ENCODE measurements at regions of chr20 and their contacts with region 1.

Region 1: DNA sequence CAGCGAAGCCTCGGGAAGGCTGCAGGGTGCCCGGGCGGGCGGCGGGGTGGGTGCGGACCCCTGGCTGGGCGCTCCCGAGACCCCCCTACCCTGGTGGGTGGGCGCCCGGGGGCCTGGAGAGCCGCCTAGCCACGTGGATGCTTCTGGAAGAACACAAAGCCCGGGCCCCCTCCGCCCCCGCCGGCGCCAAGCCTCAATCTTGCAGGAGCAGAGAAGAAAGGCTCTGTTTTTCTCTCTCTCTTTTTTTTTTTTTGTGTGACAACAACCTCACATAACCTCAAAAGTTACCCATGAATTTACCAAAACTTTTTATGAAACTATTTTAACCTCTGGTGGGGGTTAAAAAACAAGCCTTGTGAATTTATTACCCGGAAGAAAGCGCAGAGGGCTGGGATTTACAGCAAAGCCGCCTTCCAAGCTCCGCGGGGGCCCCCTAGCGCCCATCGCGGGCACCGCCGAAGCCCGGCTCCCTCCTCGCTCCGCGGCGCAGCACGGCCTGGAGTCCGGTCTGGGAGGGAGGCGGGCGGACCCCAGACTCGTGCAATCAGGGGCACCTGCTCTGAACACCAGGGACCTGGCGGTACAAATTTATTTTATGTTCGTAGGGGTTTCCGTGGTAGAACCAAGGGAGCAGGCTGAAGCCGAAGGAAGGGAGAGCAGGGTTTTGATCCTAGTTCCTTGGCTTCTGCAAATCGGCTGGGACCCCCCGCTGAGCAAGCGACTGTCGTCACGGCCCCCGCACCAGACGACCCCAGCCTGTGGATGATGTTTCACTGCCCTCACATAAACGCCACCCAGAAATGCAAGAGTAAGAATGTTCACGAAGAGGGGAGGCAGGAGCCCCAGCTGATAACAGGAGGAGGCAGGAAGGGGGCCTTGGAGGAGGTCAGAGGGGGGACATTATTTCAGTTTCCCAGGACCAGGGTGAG is 58.9 kb downstream of the ZNF831 start:
- DNase-seq: peak; percentile 72 to 90 (median 81)
- ATAC-seq: peak; percentile 71 to 97 (median 92)
- H3K4me3 ChIP-seq: peak overlapping the region; percentile 21 to 66 (median 58)
- H3K27ac ChIP-seq: peak overlapping the region in 9 of 12 donors; percentile 7 to 87 (median 72)
- H3K4me1 ChIP-seq: peaks cover 0 to 26% (median 14%) of the 10 kb centered on the region in 12 donors
- H3K27me3 ChIP-seq: peaks cover 0 to 31% (median 15%) of the 10 kb centered on the region in 9 donors
- CTCF ChIP-seq: peak; percentile 92 to 99 (median 97)
- POLR2A ChIP-seq: no peak

Region 2: DNA sequence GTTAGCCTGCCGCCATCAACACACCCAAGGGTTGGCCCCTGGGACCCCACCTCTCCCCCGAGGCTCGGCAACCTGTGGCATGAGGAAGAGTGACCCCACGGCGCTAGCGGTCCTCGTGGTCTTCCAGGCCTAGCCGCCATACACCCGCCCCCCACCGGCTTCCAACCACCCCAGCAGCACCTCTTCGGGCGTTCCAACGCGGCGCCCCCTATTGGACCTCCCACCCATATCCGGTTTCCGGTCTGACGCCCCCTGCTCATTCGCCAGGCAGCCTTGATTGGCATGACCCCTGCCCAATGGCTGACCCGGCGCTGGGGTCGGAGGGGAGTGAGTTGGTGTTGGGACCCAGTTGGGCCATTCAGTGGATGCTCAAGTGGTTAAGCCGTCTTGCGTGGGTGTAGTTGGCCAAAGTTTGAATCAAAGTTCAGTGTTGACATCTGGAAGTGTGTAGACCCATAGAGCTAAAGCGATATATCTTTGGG is 371.8 kb before region 1 on chr20 and contains the start of gene GNAS-AS1:
- intact Hi-C with region 1: no loop called
- DNase-seq: peak; percentile 83 to 91 (median 88)
- ATAC-seq: peak; percentile 79 to 91 (median 88)
- H3K4me3 ChIP-seq: peak within 1 kb of the TSS; percentile 15 to 78 (median 57)
- H3K27ac ChIP-seq: no peak within 1 kb of the TSS
- H3K4me1 ChIP-seq: peaks cover 0 to 27% (median 5%) of the 10 kb centered on the region in 12 donors
- H3K27me3 ChIP-seq: peaks cover 11 to 61% (median 26%) of the 10 kb centered on the region in 9 donors
- CTCF ChIP-seq: peak in 3 of 12 donors; percentile 15 to 23 (median 22)
- POLR2A ChIP-seq: no peak
- total RNA-seq, gene GNAS-AS1: 0.22 to 0.79 (median 0.29) TPM in 7 of 9 donors, not detected in the others

Region 3: GRCh38 chr20:59055295-59055694 is 167.2 kb before region 1 on chr20:
- intact Hi-C with region 1: loop called in 3 of 10 experiments (anchors 10 kb)
- DNase-seq: no peak
- ATAC-seq: no peak
- H3K4me3 ChIP-seq: no peak overlapping the region
- H3K27ac ChIP-seq: no peak overlapping the region
- H3K4me1 ChIP-seq: no peaks in the 10 kb centered on the region
- H3K27me3 ChIP-seq: peaks cover 0 to 10% (median 0%) of the 10 kb centered on the region in 9 donors
- CTCF ChIP-seq: peak in 9 of 12 donors; percentile 30 to 63 (median 37)
- POLR2A ChIP-seq: no peak

Region 4: DNA sequence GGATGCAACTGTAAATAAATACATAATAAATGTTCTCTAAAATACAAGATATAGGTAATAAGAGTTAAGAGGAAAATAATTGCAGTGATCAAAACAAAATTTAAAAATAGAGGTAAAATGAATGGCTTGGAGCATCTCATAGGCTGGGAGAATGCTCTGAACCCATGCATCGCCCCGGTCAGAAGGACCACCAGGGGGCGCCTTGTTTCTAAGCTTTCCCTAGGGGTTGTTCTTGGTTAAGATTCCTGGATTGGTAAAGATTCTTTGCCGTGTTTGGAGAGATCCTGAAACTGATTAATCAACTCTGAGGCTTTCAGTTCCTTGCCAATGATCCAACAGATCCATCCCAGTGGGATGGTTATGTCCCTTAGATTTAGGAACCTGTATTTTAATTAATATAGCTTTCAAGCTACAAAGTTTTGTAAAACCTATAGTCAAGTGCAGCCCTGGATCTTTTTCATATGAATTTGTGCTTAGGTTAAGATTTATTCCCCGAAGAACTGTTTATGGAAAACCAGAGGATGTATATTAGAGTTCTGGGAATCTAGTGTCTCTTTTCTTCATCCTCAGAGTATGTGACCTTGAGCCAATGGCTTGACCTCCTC is 134.6 kb before region 1 on chr20:
- intact Hi-C with region 1: loop called (anchors 1 to 5 kb)
- DNase-seq: peak; percentile 75 to 86 (median 82)
- ATAC-seq: peak in 3 of 4 donors; percentile 75 to 83 (median 81)
- H3K4me3 ChIP-seq: no peak overlapping the region
- H3K27ac ChIP-seq: no peak overlapping the region
- H3K4me1 ChIP-seq: peaks cover 0 to 9% (median 3%) of the 10 kb centered on the region in 12 donors
- H3K27me3 ChIP-seq: peaks cover 0 to 4% (median 0%) of the 10 kb centered on the region in 9 donors
- CTCF ChIP-seq: peak; percentile 85 to 98 (median 94)
- POLR2A ChIP-seq: no peak

Region 5: GRCh38 chr20:59149651-59150504 is 72.6 kb before region 1 on chr20:
- intact Hi-C with region 1: loop called in 1 of 10 experiments (anchors 5 kb)
- DNase-seq: peak in 3 of 5 donors; percentile 35 to 56 (median 50)
- ATAC-seq: peak in 2 of 4 donors; percentile 14 to 73
- H3K4me3 ChIP-seq: peak overlapping the region in 1 of 12 donors; percentile 13
- H3K27ac ChIP-seq: peak overlapping the region in 9 of 12 donors; percentile 33 to 77 (median 66)
- H3K4me1 ChIP-seq: peaks cover 4 to 64% (median 38%) of the 10 kb centered on the region in 12 donors
- H3K27me3 ChIP-seq: no peaks in the 10 kb centered on the region
- CTCF ChIP-seq: no peak
- POLR2A ChIP-seq: no peak

Region 6: DNA sequence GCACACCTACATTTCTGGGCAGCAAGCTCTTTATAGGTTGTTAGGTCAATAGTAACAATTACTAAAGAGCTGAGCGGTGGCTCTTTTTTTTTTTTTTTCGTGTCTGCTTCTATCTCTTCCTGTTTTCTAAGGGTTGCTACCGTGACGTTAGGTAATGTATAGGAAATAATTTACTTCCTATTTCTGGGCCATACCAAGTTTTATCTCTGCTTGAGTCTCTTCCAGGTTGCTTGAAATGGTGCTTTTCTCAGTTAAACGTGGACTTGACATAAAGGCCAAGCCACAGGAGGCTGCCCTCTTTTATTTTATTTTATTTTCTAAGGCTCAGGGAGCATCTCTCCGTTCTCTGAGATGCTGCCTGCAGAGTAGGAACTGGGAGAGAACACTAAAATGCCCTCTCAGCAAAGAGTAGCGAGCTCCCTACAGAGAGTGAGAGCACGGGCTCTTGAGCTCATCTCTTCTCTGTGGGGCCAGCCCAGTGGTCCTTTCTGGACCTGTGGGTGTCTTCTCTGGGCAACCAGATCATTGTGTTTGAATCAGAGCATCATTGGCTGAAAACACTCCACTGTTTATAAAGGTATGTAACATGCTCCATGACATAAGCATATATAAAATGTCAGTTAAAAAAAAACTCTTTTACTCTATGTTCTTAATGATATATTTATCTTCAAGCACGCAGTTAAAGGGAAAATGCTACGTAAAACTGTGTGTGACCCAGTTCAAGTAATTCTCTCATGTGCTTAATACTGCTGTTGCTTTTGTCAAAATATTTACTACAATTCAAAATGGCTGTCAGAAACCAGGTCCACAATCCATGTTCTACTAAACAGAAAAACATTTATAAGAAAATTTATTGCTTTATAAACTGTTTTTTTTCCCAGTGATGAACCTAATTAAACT is 58.6 kb before region 1 on chr20 and contains the start of gene ZNF831:
- intact Hi-C with region 1: no loop called
- DNase-seq: no peak
- ATAC-seq: no peak
- H3K4me3 ChIP-seq: peak within 1 kb of the TSS in 2 of 12 donors; percentile 5 to 49
- H3K27ac ChIP-seq: peak within 1 kb of the TSS in 2 of 12 donors; percentile 35 to 88
- H3K4me1 ChIP-seq: no peaks in the 10 kb centered on the region
- H3K27me3 ChIP-seq: peaks cover 0 to 14% (median 0%) of the 10 kb centered on the region in 9 donors
- CTCF ChIP-seq: no peak
- POLR2A ChIP-seq: no peak
- total RNA-seq, gene ZNF831: 0.02 to 0.77 (median 0.07) TPM in 7 of 9 donors, not detected in the others

Region 7: DNA sequence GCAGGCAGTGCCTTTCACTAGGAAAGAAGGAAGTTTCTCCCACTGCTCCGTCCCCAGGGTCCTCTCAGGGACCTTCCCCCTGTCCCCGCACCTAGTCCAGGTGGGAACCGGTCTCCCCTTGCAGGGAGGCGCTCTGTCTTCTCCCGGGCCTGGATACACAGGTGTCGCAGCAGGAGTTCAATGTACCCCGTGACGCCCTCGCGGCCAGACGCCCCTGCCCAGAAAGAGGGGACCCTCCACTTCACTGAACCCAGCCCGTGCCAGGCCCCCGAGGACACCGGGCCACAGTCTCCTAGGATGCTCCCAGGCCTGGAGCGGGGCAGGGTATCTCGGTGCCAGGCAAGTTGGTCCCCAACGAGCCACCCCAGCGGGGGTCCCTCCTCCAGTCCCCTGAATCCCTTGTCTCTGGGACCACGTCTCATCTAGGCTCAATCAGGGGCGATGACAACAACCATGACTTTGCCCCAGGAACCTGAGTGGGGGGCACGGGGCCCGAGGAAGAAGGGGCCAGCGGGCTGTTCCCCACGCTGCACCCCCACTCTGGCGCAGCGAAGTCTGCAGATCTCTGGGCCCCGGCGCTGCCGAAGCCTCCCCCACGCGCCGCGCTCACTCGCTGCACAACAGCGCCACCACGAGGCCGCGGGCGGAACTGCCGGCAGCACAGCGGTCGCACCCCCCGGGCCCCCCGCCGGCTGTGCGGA is 180.9 kb after region 1 on chr20:
- intact Hi-C with region 1: loop called in 2 of 10 experiments (anchors 5 to 10 kb)
- DNase-seq: peak in 4 of 5 donors; percentile 29 to 75 (median 40)
- ATAC-seq: peak in 3 of 4 donors; percentile 33 to 70 (median 56)
- H3K4me3 ChIP-seq: peak overlapping the region in 4 of 12 donors; percentile 3 to 11 (median 4)
- H3K27ac ChIP-seq: no peak overlapping the region
- H3K4me1 ChIP-seq: peaks cover 0 to 18% (median 7%) of the 10 kb centered on the region in 12 donors
- H3K27me3 ChIP-seq: peaks cover 9 to 81% (median 47%) of the 10 kb centered on the region in 9 donors
- CTCF ChIP-seq: peak; percentile 88 to 98 (median 94)
- POLR2A ChIP-seq: no peak

Region 8: GRCh38 chr20:59495894-59496510 is 273.5 kb after region 1 on chr20:
- intact Hi-C with region 1: loop called in 1 of 10 experiments (anchors 10 kb)
- DNase-seq: peak; percentile 50 to 77 (median 62)
- ATAC-seq: peak in 3 of 4 donors; percentile 56 to 64 (median 60)
- H3K4me3 ChIP-seq: no peak overlapping the region
- H3K27ac ChIP-seq: no peak overlapping the region
- H3K4me1 ChIP-seq: peaks cover 0 to 5% (median 0%) of the 10 kb centered on the region in 12 donors
- H3K27me3 ChIP-seq: peaks cover 0 to 40% (median 8%) of the 10 kb centered on the region in 9 donors
- CTCF ChIP-seq: peak; percentile 74 to 90 (median 84)
- POLR2A ChIP-seq: no peak

Measured in heart left ventricle (tissue), 16 donors.